ENCODE measurements at regions of chr1 and their contacts with region 1.

Region 1: DNA sequence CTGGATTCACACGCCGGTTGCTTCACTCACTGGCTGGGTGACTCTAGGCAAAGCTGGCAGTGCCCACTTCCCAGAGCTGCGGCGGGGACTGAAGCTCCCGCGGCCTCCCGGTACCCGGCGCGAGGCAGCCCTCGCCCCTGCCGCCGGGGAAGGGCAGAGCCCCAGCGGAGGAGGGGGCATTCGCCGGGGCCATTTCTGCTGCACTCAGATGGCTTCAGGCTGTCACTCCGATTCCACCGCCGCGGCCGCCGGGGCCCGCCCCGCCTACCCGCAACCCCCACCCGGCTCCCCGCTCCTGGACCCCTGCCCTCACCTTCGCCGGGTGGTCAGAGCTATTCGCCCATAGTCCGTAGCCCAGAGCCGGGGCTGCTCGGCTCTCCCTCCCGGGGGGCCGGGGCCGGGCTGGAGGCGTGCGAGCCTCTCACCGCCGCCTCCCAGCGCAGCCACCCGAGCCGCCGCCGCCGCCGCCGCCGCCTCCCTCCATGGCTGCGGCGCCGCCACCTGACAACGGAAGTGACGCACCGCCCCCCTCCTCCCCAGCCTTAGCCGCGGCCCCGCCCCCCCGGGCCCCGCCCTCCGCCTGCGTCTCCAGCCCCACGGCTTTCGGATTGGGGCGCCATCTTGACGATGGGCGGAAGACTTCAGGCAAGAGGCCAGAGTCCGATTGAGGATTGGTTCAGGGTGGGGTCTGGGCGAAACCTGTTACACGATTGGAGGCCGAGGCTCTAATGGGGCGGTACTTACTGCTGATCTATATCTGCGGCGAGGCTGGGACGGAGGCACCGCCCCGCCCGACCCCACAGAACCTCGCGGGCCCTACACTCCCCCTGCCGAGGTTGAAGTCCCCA is at the start of gene STK40:
- DNase-seq: peak; percentile 93
- H3K4me3 ChIP-seq: peak within 1 kb of the TSS; percentile 85
- H3K27me3 ChIP-seq: no peaks in the 10 kb centered on the region
- CTCF ChIP-seq: no peak
- polyA plus RNA-seq, gene STK40: 19.5 and 29.5 TPM in 2 replicates

Region 2: GRCh38 chr1:36136535-36136934 is 249.1 kb before region 1 on chr1:
- CTCF ChIA-PET with region 1: no interaction called
- POLR2A ChIA-PET with region 1: no interaction called
- DNase-seq: peak; percentile 63
- H3K4me3 ChIP-seq: no peak overlapping the region
- H3K27me3 ChIP-seq: no peaks in the 10 kb centered on the region
- CTCF ChIP-seq: no peak

Region 3: DNA sequence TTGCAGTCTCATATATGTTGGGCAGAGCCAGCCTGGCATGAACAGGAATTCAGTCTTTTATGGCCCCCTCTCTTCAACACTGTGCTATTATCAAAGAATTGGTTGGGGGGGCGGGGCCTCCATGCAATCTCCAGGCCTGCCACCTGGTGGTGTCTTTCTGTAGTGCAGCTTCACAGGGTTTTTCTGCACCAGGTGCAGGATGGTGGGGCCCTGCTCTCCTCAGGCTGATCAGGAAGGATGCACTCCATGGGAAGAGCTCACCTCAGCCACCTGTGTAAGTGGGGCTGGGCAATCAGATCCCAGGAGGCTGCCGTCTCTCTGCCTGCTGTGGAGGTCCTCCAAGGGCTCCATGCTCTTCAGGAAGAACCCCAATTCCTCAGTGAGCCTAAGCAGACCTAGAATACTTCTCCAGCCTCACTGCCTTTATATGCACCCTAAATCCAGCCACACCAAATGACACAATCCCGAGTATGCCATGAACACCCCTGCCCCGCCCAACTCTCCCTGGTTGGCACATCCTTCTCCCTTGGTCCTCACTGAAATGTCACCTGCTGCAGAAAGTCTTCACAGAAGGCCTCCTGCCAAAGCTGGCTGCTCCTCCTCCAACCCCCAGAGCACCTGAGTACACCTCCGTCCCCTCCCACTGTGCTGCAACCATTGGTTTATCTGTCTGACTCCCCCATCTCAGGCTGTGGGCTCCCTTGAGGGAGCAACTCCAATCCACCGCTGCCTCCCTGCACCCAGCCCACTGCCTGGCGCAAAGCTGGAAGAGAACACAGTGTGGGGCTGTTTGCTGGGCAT is 16.4 kb before region 1 on chr1:
- CTCF ChIA-PET with region 1: interaction called, 22 read pairs
- POLR2A ChIA-PET with region 1: interaction called, 6 read pairs
- DNase-seq: no peak
- H3K4me3 ChIP-seq: no peak overlapping the region
- H3K27me3 ChIP-seq: no peaks in the 10 kb centered on the region
- CTCF ChIP-seq: peak; percentile 94

Region 4: GRCh38 chr1:36397378-36398230 is 12.0 kb after region 1 on chr1 and contains the start of gene LSM10:
- CTCF ChIA-PET with region 1: interaction called, 5 read pairs
- POLR2A ChIA-PET with region 1: interaction called, 12 read pairs
- DNase-seq: peak; percentile 70
- H3K4me3 ChIP-seq: peak within 1 kb of the TSS; percentile 70
- H3K27me3 ChIP-seq: no peaks in the 10 kb centered on the region
- CTCF ChIP-seq: peak; percentile 9; the same call in 1 of the 2 replicates
- polyA plus RNA-seq, gene LSM10: 64.0 and 86.5 TPM in 2 replicates

Measured in BJ (cell line).